ENCODE measurements at regions of chr5 and their contacts with region 1.

Region 1: DNA sequence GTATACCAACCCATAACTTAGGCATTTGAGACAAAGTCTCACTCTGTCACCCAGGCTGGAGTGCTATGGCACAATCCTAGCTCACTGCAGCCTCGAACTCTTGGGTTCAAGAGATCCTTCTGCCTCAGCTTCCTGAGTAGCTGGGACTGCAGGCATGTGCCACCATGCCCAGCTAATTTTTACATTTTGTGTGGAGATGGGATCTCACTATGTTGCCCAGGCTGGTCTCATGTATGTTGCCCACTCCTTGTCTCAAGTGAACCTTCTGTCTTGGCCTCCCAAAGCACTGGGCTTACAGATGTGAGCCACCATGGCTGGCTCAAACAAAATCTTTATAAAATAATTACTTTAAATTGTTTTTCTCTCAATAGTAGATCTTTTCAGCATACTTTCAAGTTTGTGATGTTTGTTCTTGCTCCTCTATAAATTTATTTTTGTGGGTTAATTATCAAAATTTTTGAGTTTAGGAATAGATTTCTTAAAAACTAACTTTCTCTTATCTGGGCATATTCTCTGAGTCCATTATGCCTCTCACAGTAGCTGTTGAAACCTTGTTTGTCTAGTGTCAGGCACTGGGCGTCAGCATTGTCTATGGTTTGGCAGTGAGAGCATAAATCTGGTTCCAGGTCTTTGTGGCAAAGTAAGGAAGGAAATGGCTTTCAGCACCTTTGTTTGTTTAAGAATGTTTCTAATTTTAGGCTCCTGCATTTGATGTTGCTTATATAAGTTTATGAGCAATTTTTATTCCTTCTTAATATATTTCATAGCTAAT is 38.7 kb downstream of the NLN start:
- DNase-seq: peak; percentile 13
- ATAC-seq: no peak
- H3K4me3 ChIP-seq: no peak overlapping the region
- H3K27ac ChIP-seq: no peak overlapping the region
- H3K4me1 ChIP-seq: peaks cover 2% of the 10 kb centered on the region; the same call in 1 of the 2 replicates
- H3K27me3 ChIP-seq: no peaks in the 10 kb centered on the region
- CTCF ChIP-seq: no peak
- POLR2A ChIP-seq: no peak
- RAD21 ChIP-seq: peak; percentile 45

Region 2: DNA sequence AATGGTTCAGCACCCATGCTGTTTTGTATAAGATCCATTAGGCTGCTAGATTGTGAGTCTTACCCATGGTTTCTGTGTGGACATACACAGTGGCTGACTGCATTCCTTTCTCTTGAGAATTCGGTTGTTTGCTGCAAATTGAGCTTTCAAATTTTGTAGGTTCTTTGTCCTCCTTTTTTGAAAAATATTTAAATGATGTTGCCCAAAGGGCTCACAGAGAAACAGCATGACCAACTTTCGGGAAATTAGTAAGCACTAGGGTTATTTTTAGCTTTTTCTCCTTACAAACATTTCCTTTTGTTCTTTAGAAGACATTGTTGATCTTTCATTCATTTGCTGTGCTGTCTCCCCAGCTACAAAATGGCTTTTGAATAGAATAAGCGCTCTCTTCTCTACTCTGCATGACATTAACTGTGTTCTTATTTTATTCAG is 40.7 kb after region 1 on chr5:
- CTCF ChIA-PET with region 1: no interaction called
- POLR2A ChIA-PET with region 1: no interaction called
- dilution Hi-C with region 1: no loop called
- in situ Hi-C with region 1: no loop called
- intact Hi-C with region 1: loop called (anchors 5 kb)
- DNase-seq: peak; percentile 77
- ATAC-seq: peak; percentile 91
- H3K4me3 ChIP-seq: no peak overlapping the region
- H3K27ac ChIP-seq: no peak overlapping the region
- H3K4me1 ChIP-seq: peaks cover 11% of the 10 kb centered on the region
- H3K27me3 ChIP-seq: no peaks in the 10 kb centered on the region
- CTCF ChIP-seq: no peak
- POLR2A ChIP-seq: no peak
- RAD21 ChIP-seq: no peak

Measured in IMR-90 (cell line).